Caco-2 (cell line): ENCODE measurements at regions of chr18 and their contacts with region 1.

Region 1: DNA sequence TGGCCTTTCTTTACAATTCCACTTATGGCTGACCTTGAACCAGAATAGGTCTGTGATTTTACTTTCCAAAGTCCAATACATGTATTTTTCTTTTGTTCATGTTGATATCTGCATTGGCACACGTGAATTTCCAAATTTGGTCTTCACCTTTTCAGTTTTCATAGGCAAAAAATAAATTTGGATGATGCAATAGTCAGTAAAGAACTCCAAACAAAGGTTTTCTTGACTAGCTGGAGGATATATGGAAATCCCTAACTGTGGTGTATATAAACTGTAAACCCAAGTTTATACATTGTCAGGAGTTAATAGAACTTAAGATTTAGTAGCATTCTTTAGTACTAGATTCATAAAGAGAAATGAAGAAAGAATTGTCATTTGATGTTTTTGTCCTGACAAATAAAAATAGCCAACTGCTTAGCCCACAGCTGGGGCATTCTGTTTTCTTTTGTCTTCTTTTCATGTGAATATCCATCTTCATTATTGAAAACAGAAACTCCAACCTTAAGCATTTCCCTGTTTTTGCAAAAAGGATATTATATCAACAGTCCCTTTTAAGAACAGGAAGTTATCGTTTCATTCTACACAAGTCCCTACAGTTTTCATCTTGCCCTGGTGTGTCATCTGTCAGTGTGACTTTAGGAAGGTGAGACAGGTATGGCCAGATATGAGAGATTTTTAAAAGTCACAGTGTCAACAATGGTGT is 132.9 kb downstream of the BCL2 start:
- DNase-seq: no peak
- H3K4me3 ChIP-seq: no peak overlapping the region
- H3K4me3 Mint-ChIP-seq: peak overlapping the region; percentile 44
- H3K27ac Mint-ChIP-seq: peak overlapping the region; percentile 53
- H3K4me1 ChIP-seq: peaks cover 22% of the 10 kb centered on the region
- H3K4me1 Mint-ChIP-seq: peaks cover 23% of the 10 kb centered on the region
- H3K27me3 ChIP-seq: no peaks in the 10 kb centered on the region
- H3K27me3 Mint-ChIP-seq: no peaks in the 10 kb centered on the region
- CTCF ChIP-seq: no peak

Region 2: GRCh38 chr18:63105636-63106316 is 80.9 kb before region 1 on chr18:
- CTCF ChIA-PET with region 1: no interaction called
- POLR2A ChIA-PET with region 1: no interaction called
- intact Hi-C with region 1: no loop called
- DNase-seq: no peak
- H3K4me3 ChIP-seq: no peak overlapping the region
- H3K4me3 Mint-ChIP-seq: no peak overlapping the region
- H3K27ac Mint-ChIP-seq: no peak overlapping the region
- H3K4me1 ChIP-seq: peaks cover 4% of the 10 kb centered on the region
- H3K4me1 Mint-ChIP-seq: peaks cover 7% of the 10 kb centered on the region
- H3K27me3 ChIP-seq: no peaks in the 10 kb centered on the region
- H3K27me3 Mint-ChIP-seq: no peaks in the 10 kb centered on the region
- CTCF ChIP-seq: no peak

Region 3: GRCh38 chr18:63131106-63131958 is 55.3 kb before region 1 on chr18:
- CTCF ChIA-PET with region 1: no interaction called
- POLR2A ChIA-PET with region 1: no interaction called
- intact Hi-C with region 1: loop called (anchors 5 kb)
- DNase-seq: no peak
- H3K4me3 ChIP-seq: no peak overlapping the region
- H3K4me3 Mint-ChIP-seq: no peak overlapping the region
- H3K27ac Mint-ChIP-seq: no peak overlapping the region
- H3K4me1 ChIP-seq: peaks cover 14% of the 10 kb centered on the region
- H3K4me1 Mint-ChIP-seq: peaks cover 9% of the 10 kb centered on the region
- H3K27me3 ChIP-seq: no peaks in the 10 kb centered on the region
- H3K27me3 Mint-ChIP-seq: no peaks in the 10 kb centered on the region
- CTCF ChIP-seq: peak; percentile 9 to 10